ENCODE measurements at regions of chr4 and their contacts with region 1.

Region 1: DNA sequence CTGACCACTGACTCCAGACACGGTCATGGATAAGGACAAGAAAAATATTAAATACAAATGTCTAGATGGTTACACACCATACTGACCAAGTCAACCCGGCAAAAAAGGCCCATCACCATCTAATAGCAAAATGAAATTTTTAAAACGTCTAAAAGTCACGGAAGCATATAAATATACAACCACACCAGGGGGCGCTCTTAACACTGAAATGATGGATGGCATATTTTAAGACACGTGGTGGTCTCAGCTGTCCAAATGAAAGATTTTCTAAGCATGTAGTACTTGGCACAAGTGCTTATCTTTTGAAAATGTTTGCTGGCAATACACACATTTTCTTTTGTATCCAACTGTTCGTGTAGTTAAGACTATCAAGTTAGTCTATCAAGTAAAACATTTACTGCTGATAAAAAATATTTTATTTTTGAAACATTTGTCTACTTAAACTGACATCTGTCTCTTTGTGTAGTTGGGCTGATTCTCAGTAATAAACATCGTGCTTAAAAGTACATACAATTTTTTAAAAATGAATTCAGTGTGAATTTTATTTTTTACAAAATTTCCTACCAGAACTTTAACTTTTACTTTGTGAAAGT is 64.6 kb downstream of the COX7B2 start:
- DNase-seq: peak; percentile 7
- H3K4me3 ChIP-seq: no peak overlapping the region
- H3K27ac ChIP-seq: no peak overlapping the region
- H3K4me1 ChIP-seq: no peaks in the 10 kb centered on the region
- H3K27me3 ChIP-seq: peaks cover 2% of the 10 kb centered on the region
- CTCF ChIP-seq: peak; percentile 66 to 68

Region 2: DNA sequence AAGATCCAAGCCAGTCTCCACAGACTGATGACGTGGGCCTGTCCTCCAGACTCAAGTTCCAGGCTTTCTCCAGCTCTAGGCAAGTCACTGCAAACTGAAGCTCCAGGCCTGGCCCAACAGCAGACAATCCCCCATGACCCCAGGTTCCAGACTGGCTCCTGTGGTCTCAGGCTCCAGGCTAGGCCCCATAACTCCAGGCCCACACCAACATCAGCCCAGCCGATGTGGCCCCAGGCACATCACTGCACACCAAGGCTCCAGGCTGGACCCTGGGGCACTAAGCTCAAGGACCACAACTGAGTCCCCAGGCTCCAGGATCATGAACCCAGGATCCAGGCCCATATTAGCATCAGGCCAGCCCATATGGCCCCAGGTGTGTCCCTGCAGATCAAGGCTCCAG is 79.0 kb before region 1 on chr4:
- CTCF ChIA-PET with region 1: no interaction called
- dilution Hi-C with region 1: no loop called
- in situ Hi-C with region 1: no loop called
- intact Hi-C with region 1: no loop called
- DNase-seq: no peak
- H3K4me3 ChIP-seq: no peak overlapping the region
- H3K27ac ChIP-seq: no peak overlapping the region
- H3K4me1 ChIP-seq: no peaks in the 10 kb centered on the region
- H3K27me3 ChIP-seq: no peaks in the 10 kb centered on the region
- CTCF ChIP-seq: no peak

Region 3: GRCh38 chr4:47032415-47033106 is 188.1 kb after region 1 on chr4:
- CTCF ChIA-PET with region 1: no interaction called
- dilution Hi-C with region 1: no loop called
- in situ Hi-C with region 1: no loop called
- intact Hi-C with region 1: loop called (anchors 2 kb)
- DNase-seq: peak; percentile 14
- H3K4me3 ChIP-seq: peak overlapping the region; percentile 23 to 53 (median 52)
- H3K27ac ChIP-seq: no peak overlapping the region
- H3K4me1 ChIP-seq: peaks cover 16% of the 10 kb centered on the region
- H3K27me3 ChIP-seq: peaks cover 4% of the 10 kb centered on the region
- CTCF ChIP-seq: peak; percentile 40 to 70

Region 4: GRCh38 chr4:47122592-47123291 is 278.3 kb after region 1 on chr4:
- CTCF ChIA-PET with region 1: no interaction called
- dilution Hi-C with region 1: no loop called
- in situ Hi-C with region 1: no loop called
- intact Hi-C with region 1: loop called (anchors 1 kb)
- DNase-seq: peak; percentile 58
- H3K4me3 ChIP-seq: no peak overlapping the region
- H3K27ac ChIP-seq: no peak overlapping the region
- H3K4me1 ChIP-seq: no peaks in the 10 kb centered on the region
- H3K27me3 ChIP-seq: peaks cover 3% of the 10 kb centered on the region
- CTCF ChIP-seq: peak; percentile 92 to 94

Region 5: GRCh38 chr4:47383829-47384427 is 539.5 kb after region 1 on chr4:
- CTCF ChIA-PET with region 1: no interaction called
- dilution Hi-C with region 1: no loop called
- in situ Hi-C with region 1: no loop called
- intact Hi-C with region 1: loop called (anchors 1 kb)
- DNase-seq: peak; percentile 11
- H3K4me3 ChIP-seq: no peak overlapping the region
- H3K27ac ChIP-seq: no peak overlapping the region
- H3K4me1 ChIP-seq: no peaks in the 10 kb centered on the region
- H3K27me3 ChIP-seq: no peaks in the 10 kb centered on the region
- CTCF ChIP-seq: peak; percentile 32 to 55

Region 6: GRCh38 chr4:47490550-47490949 is 646.1 kb after region 1 on chr4:
- CTCF ChIA-PET with region 1: interaction called, 10 read pairs
- dilution Hi-C with region 1: no loop called
- in situ Hi-C with region 1: no loop called
- intact Hi-C with region 1: no loop called
- DNase-seq: peak; percentile 34
- H3K4me3 ChIP-seq: no peak overlapping the region
- H3K27ac ChIP-seq: no peak overlapping the region
- H3K4me1 ChIP-seq: no peaks in the 10 kb centered on the region
- H3K27me3 ChIP-seq: no peaks in the 10 kb centered on the region
- CTCF ChIP-seq: peak; percentile 54 to 67

Measured in mammary epithelial cell (primary cell).